Activated B cell treated with CpG ODN at 0.5 μM for 24 hours (primary cell): ENCODE measurements at regions of chr3 and their contacts with region 1.

Region 1: DNA sequence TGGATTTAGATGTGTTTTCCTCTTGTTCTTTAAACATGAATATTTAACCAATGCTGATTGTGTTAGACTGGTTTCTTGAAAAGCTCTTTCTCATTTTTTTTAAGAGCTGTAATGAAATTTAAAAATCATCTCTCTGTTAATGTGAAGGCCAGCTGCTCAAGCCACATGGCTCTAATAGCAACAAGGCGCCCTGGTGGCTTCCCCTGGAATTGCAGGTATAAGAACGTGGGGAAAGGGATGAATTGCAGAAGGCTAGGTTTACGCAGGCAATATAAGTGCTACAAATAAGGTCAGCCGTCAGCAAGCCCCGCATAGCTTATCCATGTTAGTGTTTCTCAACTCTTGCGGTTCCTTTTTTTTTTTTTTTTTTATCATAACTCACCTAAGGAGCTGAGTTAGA is 108.5 kb downstream of the SAMMSON start:
- DNase-seq: no peak
- ATAC-seq: no peak
- H3K4me3 Mint-ChIP-seq: no peak overlapping the region
- H3K27ac Mint-ChIP-seq: no peak overlapping the region
- H3K4me1 Mint-ChIP-seq: no peaks in the 10 kb centered on the region
- H3K27me3 Mint-ChIP-seq: peaks cover 13% of the 10 kb centered on the region
- CTCF ChIP-seq: no peak

Region 2: DNA sequence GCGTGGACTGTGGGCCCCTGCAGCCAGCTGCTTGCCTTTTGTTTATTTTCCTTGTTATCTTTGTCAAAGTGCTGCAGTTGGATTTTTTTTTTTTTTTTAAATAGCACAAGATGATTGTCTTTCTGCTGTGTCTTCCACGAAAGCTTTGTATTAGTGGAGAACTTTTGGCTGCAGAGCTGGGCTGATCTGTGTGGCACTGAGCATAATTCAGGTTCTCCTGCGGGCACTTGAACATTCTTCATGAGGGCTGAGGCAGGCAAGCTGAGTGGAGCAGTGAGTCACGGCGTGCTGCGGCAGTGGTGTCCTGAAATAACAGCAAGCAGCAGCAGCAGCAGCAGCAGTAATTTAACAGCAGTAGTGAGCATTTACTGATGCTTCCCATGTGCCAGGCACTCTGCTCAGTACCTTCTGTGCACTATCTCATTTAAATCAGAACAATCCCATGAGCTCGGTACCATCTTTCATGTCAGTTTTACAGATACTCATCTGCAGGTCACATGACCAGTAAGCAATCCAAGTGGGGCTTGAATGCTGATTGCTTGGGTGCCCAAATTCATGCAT is 323.0 kb before region 1 on chr3:
- CTCF ChIA-PET with region 1: no interaction called
- POLR2A ChIA-PET with region 1: no interaction called
- intact Hi-C with region 1: no loop called
- DNase-seq: no peak
- ATAC-seq: no peak
- H3K4me3 Mint-ChIP-seq: no peak overlapping the region
- H3K27ac Mint-ChIP-seq: no peak overlapping the region
- H3K4me1 Mint-ChIP-seq: no peaks in the 10 kb centered on the region
- H3K27me3 Mint-ChIP-seq: peaks cover 3% of the 10 kb centered on the region
- CTCF ChIP-seq: no peak

Region 3: GRCh38 chr3:70120357-70121121 is 12.5 kb after region 1 on chr3:
- CTCF ChIA-PET with region 1: interaction called, 11 read pairs
- POLR2A ChIA-PET with region 1: no interaction called
- intact Hi-C with region 1: no loop called
- DNase-seq: peak; percentile 32
- ATAC-seq: peak; percentile 62
- H3K4me3 Mint-ChIP-seq: no peak overlapping the region
- H3K27ac Mint-ChIP-seq: no peak overlapping the region
- H3K4me1 Mint-ChIP-seq: no peaks in the 10 kb centered on the region
- H3K27me3 Mint-ChIP-seq: peaks cover 15% of the 10 kb centered on the region
- CTCF ChIP-seq: peak; percentile 37

Region 4: DNA sequence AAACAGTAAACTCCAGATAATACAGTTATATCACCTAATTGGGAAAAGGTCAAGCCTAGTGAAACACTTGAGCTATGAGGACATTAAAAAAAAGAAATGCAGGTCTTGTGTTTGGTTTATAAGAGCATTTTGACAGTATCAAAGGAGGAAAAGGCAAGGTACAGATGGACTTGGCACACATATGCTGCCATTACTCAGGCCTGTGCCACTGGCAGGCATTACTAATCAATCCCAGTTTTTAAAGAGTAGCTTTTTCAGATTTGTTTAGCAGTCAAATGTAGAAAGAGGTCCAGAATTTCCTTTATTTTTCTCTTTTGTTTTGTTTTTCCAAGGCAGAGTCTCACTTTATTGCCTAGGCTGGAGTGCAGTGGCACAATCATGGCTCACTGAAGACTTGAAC is 165.4 kb after region 1 on chr3:
- CTCF ChIA-PET with region 1: no interaction called
- POLR2A ChIA-PET with region 1: no interaction called
- intact Hi-C with region 1: no loop called
- DNase-seq: no peak
- ATAC-seq: no peak
- H3K4me3 Mint-ChIP-seq: no peak overlapping the region
- H3K27ac Mint-ChIP-seq: no peak overlapping the region
- H3K4me1 Mint-ChIP-seq: no peaks in the 10 kb centered on the region
- H3K27me3 Mint-ChIP-seq: no peaks in the 10 kb centered on the region
- CTCF ChIP-seq: no peak